Uterus (tissue), 4 donors: ENCODE measurements at regions of chr10 and their contacts with region 1.

Region 1: GRCh38 chr10:28938745-28939144 is 261.4 kb downstream of the BAMBI start:
- DNase-seq: no peak
- H3K4me3 ChIP-seq: no peak overlapping the region
- H3K27ac ChIP-seq: no peak overlapping the region
- H3K4me1 ChIP-seq: no peaks in the 10 kb centered on the region
- H3K27me3 ChIP-seq: no peaks in the 10 kb centered on the region
- CTCF ChIP-seq: no peak
- POLR2A ChIP-seq: no peak

Region 2: DNA sequence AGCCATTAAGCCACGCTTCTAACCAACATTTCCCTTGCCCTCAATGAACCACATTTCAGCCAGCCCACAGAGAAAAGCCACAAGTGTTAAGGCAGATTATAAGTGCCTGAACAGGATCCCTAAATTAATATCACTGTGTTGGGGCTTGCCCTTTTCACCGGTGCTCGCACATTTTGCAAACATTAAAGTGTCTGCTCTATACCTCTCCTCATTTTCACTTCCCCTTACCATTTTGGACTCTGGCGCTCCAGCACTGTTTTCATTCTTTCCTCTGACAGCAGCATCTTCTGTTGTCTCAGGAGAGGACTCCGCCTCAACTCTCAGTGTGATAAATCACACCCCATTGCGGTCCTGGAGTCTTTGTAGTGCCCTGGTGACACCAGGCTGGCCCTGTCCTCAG is 12.7 kb after region 1 on chr10:
- intact Hi-C with region 1: loop called (anchors 1 kb)
- DNase-seq: no peak
- H3K4me3 ChIP-seq: no peak overlapping the region
- H3K27ac ChIP-seq: no peak overlapping the region
- H3K4me1 ChIP-seq: peaks cover 0 to 5% of the 10 kb centered on the region in 2 donors
- H3K27me3 ChIP-seq: no peaks in the 10 kb centered on the region
- CTCF ChIP-seq: no peak
- POLR2A ChIP-seq: no peak